WTC11 (cell line): ENCODE measurements at regions of chr4 and their contacts with region 1.

Region 1: DNA sequence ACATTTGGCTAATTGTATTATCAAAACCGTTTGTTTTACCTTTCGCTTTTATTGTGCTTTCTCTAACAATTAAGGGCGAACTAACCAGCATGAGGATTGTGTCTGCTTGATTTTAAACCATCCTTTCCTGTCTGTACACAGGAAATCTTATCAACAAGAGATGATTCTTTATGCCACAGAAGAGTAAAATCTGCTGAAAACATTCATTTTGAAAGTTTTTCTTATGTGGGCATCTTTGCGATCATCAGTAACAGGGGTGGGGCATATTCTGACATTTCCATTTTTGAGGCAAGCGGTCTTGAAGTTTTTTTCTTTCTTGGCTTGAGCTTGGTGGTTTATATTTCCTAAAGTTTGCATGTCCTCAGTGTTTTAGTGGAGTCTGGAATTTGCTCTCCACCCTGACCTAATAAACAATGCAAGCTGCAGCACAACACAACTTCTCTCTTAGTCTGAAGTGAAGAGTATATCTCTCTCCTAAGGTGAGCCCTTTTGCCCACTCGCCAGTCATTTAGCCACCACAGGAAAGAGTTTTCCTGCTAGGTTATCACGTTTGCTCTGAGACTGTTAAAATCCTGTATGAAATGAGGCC is 26.6 kb downstream of the NFKB1 start:
- DNase-seq: no peak
- ATAC-seq: no peak
- H3K4me3 Mint-ChIP-seq: no peak overlapping the region
- H3K27ac Mint-ChIP-seq: peak overlapping the region; percentile 42; the same call in 1 of the 2 replicates
- H3K4me1 Mint-ChIP-seq: peaks cover 13% of the 10 kb centered on the region
- H3K27me3 Mint-ChIP-seq: no peaks in the 10 kb centered on the region
- CTCF ChIP-seq: no peak

Region 2: GRCh38 chr4:102511830-102512605 is 15.8 kb before region 1 on chr4:
- CTCF ChIA-PET with region 1: no interaction called
- POLR2A ChIA-PET with region 1: no interaction called
- DNase-seq: no peak
- ATAC-seq: no peak
- H3K4me3 Mint-ChIP-seq: no peak overlapping the region
- H3K27ac Mint-ChIP-seq: no peak overlapping the region
- H3K4me1 Mint-ChIP-seq: no peaks in the 10 kb centered on the region
- H3K27me3 Mint-ChIP-seq: no peaks in the 10 kb centered on the region
- CTCF ChIP-seq: no peak

Region 3: DNA sequence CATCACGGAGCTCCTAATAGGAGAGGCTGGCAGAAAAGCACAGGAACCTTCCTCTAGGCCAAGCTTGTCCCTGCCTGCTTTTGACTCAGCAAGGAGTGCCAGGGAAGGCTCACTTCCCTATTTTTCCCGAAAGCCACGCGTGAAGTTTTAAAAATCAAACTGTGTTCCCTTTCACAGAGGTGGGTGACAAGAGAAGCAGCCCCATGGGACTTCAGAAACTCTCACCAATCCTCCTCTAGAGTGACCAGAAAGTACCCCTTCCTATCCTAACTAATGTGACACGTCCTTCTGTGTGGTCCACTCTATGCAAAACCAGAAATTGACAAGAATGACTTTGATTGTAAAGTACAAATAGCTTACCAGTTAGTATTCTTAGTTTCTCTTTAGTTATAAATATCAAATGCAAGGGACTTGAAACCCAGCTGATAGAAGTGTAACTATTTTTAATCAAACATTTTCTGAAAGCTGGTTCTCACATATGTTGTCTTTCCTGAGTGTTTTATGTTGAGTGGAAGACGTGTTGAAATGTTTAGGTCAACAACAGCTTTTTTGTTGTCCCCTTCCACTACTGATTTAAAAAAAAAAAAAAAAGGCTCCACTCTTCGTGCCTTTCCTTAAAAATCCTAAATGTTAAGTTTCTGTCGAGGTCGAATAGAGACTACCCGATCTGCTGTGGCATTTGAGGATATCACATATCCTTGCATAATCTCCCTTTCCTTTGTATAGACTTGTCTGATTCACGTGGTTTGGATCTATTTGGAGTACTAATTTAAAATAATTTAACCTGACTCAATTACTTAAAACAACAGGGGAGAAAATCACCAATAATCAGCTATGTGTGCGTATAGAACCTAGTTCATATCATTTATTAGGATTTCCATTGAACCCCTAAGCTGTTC is 15.5 kb after region 1 on chr4:
- CTCF ChIA-PET with region 1: interaction called, 11 read pairs
- POLR2A ChIA-PET with region 1: no interaction called
- DNase-seq: no peak
- ATAC-seq: no peak
- H3K4me3 Mint-ChIP-seq: no peak overlapping the region
- H3K27ac Mint-ChIP-seq: no peak overlapping the region
- H3K4me1 Mint-ChIP-seq: no peaks in the 10 kb centered on the region
- H3K27me3 Mint-ChIP-seq: no peaks in the 10 kb centered on the region
- CTCF ChIP-seq: no peak

Region 4: GRCh38 chr4:102843273-102843672 is 315.5 kb after region 1 on chr4:
- CTCF ChIA-PET with region 1: no interaction called
- POLR2A ChIA-PET with region 1: no interaction called
- DNase-seq: no peak
- ATAC-seq: no peak
- H3K4me3 Mint-ChIP-seq: no peak overlapping the region
- H3K27ac Mint-ChIP-seq: no peak overlapping the region
- H3K4me1 Mint-ChIP-seq: no peaks in the 10 kb centered on the region
- H3K27me3 Mint-ChIP-seq: no peaks in the 10 kb centered on the region
- CTCF ChIP-seq: no peak